Activated CD4-positive, alpha-beta T cell treated with anti-CD3 and anti-CD28 coated beads for 36 hours (primary cell): ENCODE measurements at regions of chr2 and their contacts with region 1.

Region 1: DNA sequence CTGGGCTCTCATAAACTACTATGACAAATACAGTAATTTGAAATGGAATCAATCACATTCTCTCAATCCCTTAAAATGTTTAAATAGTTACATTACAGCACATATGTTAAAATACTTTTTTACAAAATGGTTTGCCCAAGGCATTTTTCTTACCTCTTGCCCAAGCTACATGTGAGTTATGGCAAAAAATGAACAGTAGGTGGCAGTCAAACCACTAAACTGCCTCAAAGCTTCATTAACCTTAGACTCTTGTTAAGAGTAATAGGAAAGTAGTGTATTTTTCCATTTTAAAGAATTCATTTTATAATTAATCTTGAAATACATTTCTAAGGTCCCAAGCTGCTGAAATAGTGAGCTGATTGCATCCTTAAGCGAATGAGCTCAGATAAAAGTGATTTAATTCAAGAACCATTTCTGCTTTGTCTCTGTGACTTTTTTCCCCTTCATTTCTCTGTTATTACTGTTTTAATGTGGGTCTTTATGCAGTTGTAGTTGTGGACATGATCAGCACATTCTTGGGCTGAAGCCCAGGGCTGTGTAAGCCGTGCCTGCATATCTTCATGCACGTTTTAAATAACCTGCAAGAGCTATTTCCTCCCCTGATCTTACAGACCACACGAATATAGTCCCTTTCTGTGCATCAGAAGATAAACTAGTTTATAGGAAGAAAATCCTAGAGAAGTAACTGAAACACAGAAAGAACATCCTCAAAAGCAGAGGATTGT is 311.8 kb downstream of the LNPK start:
- DNase-seq: peak; percentile 19
- ATAC-seq: no peak
- H3K4me3 Mint-ChIP-seq: no peak overlapping the region
- H3K27ac Mint-ChIP-seq: no peak overlapping the region
- H3K4me1 Mint-ChIP-seq: no peaks in the 10 kb centered on the region
- H3K27me3 Mint-ChIP-seq: peaks cover 18% of the 10 kb centered on the region

Region 2: DNA sequence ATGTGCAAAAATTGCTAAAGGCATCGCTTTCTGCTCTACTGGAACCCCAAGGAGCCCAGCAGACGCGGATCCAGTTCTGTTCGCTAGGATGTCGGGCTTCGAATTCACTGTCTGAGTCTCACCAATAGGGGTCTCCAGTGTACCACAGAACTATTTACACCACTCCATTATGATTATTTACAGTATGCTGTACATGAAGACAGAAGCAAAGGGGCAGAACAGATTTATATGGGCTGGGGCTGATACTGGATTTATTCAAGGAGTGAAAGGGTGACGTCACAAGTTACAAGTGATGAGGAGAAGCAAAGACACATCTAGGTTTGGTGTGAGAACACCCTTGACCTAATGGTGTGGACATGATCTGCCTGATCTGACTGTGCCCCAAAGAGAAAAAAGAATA is 323.5 kb before region 1 on chr2:
- CTCF ChIA-PET with region 1: interaction called, 5 read pairs
- POLR2A ChIA-PET with region 1: no interaction called
- intact Hi-C with region 1: loop called in 1 of 2 experiments (anchors 5 kb)
- DNase-seq: peak; percentile 35
- ATAC-seq: peak; percentile 47
- H3K4me3 Mint-ChIP-seq: no peak overlapping the region
- H3K27ac Mint-ChIP-seq: no peak overlapping the region
- H3K4me1 Mint-ChIP-seq: no peaks in the 10 kb centered on the region
- H3K27me3 Mint-ChIP-seq: peaks cover 15% of the 10 kb centered on the region

Region 3: DNA sequence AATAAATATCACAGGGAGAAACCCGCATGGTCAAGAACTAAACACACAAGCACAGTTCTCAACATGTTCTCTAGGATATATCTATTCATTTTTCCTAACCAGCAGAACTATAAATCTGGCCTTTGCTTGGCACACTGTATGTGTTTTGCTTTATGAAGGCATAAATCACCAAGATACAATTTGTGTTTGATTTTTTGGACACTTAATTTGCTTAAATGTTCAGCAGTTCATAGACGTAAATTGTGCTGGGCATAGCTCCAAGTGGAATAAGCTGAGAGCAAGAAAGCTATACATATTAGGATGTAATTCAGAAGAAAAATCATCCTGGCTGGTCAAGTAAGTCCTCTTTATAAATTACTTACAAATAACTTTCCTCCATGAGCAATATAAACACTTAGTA is 167.3 kb before region 1 on chr2:
- CTCF ChIA-PET with region 1: no interaction called
- POLR2A ChIA-PET with region 1: no interaction called
- intact Hi-C with region 1: no loop called
- DNase-seq: no peak
- ATAC-seq: no peak
- H3K4me3 Mint-ChIP-seq: no peak overlapping the region
- H3K27ac Mint-ChIP-seq: no peak overlapping the region
- H3K4me1 Mint-ChIP-seq: no peaks in the 10 kb centered on the region
- H3K27me3 Mint-ChIP-seq: no peaks in the 10 kb centered on the region

Region 4: GRCh38 chr2:175677880-175678279 is 12.4 kb before region 1 on chr2:
- CTCF ChIA-PET with region 1: interaction called, 19 read pairs
- POLR2A ChIA-PET with region 1: interaction called, 3 read pairs
- intact Hi-C with region 1: no loop called
- DNase-seq: no peak
- ATAC-seq: no peak
- H3K4me3 Mint-ChIP-seq: no peak overlapping the region
- H3K27ac Mint-ChIP-seq: no peak overlapping the region
- H3K4me1 Mint-ChIP-seq: no peaks in the 10 kb centered on the region
- H3K27me3 Mint-ChIP-seq: peaks cover 8% of the 10 kb centered on the region

Region 5: DNA sequence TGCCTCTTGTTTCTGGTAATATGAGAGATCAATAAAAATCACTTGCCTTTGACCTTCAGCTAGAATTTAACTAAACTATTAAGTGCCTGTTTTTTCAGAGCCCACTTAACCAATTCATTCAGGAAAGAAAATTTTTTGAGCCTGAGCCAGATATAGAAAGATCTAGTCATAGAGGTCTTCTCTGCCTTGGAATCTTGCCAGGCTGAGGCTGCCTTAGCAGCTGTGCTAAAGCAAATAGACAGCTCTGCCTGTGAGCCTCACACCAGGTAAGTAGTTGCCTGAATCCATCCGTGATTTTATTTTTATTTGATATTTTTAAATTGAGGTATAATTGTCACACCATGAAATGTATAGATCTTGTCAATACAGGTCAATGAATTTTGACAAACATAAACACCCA is 366.1 kb after region 1 on chr2:
- CTCF ChIA-PET with region 1: no interaction called
- POLR2A ChIA-PET with region 1: no interaction called
- intact Hi-C with region 1: no loop called
- DNase-seq: no peak
- ATAC-seq: no peak
- H3K4me3 Mint-ChIP-seq: no peak overlapping the region
- H3K27ac Mint-ChIP-seq: no peak overlapping the region
- H3K4me1 Mint-ChIP-seq: no peaks in the 10 kb centered on the region
- H3K27me3 Mint-ChIP-seq: peaks cover 33% of the 10 kb centered on the region